HAP-1 (cell line): ENCODE measurements at regions of chr17 and their contacts with region 1.

Region 1: DNA sequence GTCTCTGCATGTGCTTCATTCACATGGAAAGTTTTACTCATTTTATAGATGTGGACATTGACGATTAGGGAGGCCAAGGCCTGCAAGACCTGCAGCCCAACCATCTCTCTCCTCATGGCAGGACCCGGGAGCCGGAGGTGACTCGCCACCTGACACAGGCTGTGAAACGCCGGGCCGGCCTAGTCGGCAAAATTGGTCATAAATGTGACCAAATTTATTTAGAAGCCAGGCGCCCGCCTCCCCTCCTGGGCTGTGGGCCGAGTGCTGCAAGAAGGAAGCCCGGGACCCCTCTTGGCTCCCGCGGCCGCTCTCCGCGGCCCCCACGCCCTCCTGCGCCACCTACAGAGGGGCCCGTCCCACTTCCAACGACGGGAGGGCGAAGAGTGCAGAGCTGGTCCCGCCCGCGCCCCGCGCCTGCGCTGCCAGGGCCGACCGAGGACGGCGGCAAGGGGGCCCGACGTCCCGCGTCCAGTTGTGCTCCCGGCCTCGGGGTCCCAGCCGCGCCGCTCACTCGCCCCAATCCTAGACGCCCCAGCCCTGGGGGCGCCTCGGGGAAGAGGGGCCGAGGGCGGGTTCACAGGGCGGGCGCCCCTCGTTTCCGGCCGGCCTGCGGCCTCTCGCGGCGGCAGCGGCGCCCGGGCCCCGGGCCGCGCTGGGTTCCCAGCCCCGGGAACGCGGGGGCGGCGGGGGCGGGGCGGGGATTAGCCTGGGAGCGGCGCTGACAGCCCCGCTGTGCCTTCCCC is 47.5 kb downstream of the WNT3 start:
- DNase-seq: peak in 1 of 2 experiments; percentile 73
- H3K4me3 ChIP-seq: peak overlapping the region; percentile 26
- H3K4me1 ChIP-seq: peaks cover 12% of the 10 kb centered on the region
- H3K27me3 ChIP-seq: peaks cover 10% of the 10 kb centered on the region; the same call in 1 of the 2 replicates

Region 2: DNA sequence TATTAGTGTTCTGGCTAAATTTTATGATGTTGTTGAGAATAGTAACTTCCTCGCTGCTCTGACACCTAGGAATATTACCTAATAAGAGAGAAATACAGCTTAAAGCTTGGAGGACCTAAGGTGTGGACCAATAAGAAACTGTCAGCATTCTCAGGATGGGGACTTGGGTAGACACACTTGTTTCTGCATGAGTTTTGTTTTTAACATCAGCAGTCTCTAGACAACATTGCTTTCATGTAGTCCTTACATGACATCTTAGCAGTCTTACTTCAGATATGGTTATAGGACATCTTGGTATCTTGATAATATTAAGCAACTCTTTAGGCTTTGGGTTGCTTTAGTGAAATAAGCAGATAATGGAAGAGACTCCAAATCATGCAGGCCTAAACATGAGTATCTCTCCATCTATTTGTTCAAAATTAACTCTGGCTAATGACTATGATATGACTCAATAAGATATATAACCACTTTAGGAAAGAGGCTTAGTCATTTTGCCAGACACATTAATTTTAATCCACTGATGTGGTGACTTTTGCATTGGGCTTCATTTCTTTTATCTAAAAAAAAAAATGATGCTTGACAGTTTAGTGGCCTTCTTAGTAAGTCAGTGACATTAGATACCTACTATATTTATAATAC is 37.0 kb before region 1 on chr17:
- in situ Hi-C with region 1: loop called (anchors 5 kb)
- DNase-seq: no peak
- H3K4me3 ChIP-seq: no peak overlapping the region
- H3K4me1 ChIP-seq: peaks cover 17% of the 10 kb centered on the region
- H3K27me3 ChIP-seq: no peaks in the 10 kb centered on the region

Region 3: GRCh38 chr17:46822388-46822921 is 51.5 kb after region 1 on chr17:
- in situ Hi-C with region 1: loop called (anchors 10 kb)
- DNase-seq: peak in 1 of 2 experiments; percentile 50
- H3K4me3 ChIP-seq: no peak overlapping the region
- H3K4me1 ChIP-seq: no peaks in the 10 kb centered on the region
- H3K27me3 ChIP-seq: peaks cover 2% of the 10 kb centered on the region

Region 4: DNA sequence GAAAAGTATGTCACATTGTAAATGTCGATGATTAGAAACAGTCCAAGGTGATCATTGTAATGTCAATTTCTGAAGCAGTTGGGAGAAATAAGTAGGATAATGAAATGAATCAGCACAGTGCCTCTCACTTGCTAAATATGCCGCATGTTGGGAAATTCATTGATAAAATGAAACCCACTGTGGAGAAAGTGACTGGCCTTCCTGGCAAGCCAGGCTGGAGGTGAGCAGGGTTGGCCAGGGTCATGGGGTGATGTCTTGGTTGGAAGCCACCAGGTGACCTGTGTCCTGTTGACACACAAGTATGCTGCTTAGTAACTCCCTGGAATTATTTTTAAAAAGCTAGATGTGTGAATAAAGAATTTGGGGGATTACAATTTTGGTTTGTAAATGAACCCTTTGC is 65.5 kb after region 1 on chr17:
- in situ Hi-C with region 1: no loop called
- DNase-seq: no peak
- H3K4me3 ChIP-seq: no peak overlapping the region
- H3K4me1 ChIP-seq: no peaks in the 10 kb centered on the region
- H3K27me3 ChIP-seq: 0 out of 2 replicates have a peak, but pooled peaks cover 6% of the 10 kb centered on the region

Region 5: DNA sequence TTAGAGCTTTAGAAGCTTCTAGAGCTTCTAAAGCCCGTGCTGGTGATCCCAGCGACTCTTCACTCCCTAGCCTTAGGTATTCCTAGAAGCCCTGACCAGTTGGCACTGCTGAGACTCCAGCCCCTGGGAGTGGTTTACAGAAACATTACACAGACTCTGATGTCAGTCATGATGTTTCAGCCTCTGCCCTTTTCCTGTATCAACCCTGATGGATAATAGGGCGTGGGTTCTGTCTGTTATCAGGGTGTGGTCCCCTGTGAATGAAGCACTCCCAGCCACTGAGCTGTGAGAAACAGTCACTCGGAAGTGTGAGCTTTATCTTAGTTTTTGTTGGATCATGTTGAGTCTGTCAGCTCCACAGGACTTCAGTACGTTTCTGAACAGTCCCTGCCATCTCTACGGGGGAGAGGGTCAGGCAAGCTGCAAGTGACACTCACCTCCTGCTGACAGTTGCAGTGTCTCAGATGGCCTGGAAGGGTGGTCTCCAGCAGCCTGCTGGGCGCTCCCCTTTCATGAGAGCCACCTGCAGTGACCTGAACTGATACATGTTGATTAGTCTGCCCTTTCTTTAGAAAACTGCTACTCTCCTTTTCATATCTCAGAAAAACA is 164.8 kb after region 1 on chr17:
- in situ Hi-C with region 1: no loop called
- DNase-seq: no peak
- H3K4me3 ChIP-seq: no peak overlapping the region
- H3K4me1 ChIP-seq: no peaks in the 10 kb centered on the region
- H3K27me3 ChIP-seq: no peaks in the 10 kb centered on the region